MCF 10A (cell line): ENCODE measurements at regions of chr6 and their contacts with region 1.

Region 1: GRCh38 chr6:29696155-29697125 is 15.5 kb upstream of the ZFP57 start:
- DNase-seq: peak; percentile 57
- H3K4me3 Mint-ChIP-seq: no peak overlapping the region
- H3K27ac Mint-ChIP-seq: no peak overlapping the region
- H3K4me1 Mint-ChIP-seq: no peaks in the 10 kb centered on the region
- H3K27me3 Mint-ChIP-seq: no peaks in the 10 kb centered on the region
- CTCF ChIP-seq: peak; percentile 64

Region 2: GRCh38 chr6:29641430-29642148 is 54.9 kb before region 1 on chr6:
- CTCF ChIA-PET with region 1: interaction called, 369 read pairs
- POLR2A ChIA-PET with region 1: no interaction called
- intact Hi-C with region 1: no loop called
- DNase-seq: no peak
- H3K4me3 Mint-ChIP-seq: no peak overlapping the region
- H3K27ac Mint-ChIP-seq: no peak overlapping the region
- H3K4me1 Mint-ChIP-seq: peaks cover 10% of the 10 kb centered on the region
- H3K27me3 Mint-ChIP-seq: no peaks in the 10 kb centered on the region
- CTCF ChIP-seq: no peak

Region 3: DNA sequence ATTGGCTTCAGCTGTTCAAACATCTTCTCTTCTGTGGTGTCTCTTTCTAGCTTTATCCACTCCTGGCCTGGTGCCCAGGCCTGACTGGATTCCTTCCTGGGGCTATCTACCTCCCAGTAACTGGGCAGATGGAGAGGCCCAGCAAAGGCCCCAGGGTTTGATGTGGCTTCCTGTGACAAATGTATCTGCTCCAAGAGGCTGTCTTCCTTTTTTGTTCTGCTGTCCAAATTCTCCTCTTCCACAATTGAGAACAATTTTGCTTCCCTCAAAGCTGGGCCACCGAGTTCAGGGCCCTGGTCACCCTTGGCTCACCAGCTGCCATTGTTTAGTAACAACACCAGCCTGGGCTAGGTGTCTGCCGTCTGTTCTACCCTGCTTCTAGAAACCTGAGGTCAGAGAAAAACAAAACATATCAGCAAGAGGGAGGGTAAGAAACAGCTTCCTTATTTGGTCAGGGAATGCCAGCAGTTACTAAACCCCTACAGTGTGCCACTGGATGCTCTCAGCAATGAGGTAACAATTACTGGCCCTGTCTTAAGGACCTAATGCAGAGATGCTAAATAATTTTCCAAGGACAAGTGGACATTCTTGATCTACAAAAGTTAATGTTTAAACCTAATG is 19.3 kb before region 1 on chr6:
- CTCF ChIA-PET with region 1: interaction called, 30 read pairs
- POLR2A ChIA-PET with region 1: interaction called, 8 read pairs
- intact Hi-C with region 1: no loop called
- DNase-seq: peak; percentile 51
- H3K4me3 Mint-ChIP-seq: no peak overlapping the region
- H3K27ac Mint-ChIP-seq: peak overlapping the region; percentile 97
- H3K4me1 Mint-ChIP-seq: peaks cover 24% of the 10 kb centered on the region
- H3K27me3 Mint-ChIP-seq: no peaks in the 10 kb centered on the region
- CTCF ChIP-seq: no peak

Region 4: DNA sequence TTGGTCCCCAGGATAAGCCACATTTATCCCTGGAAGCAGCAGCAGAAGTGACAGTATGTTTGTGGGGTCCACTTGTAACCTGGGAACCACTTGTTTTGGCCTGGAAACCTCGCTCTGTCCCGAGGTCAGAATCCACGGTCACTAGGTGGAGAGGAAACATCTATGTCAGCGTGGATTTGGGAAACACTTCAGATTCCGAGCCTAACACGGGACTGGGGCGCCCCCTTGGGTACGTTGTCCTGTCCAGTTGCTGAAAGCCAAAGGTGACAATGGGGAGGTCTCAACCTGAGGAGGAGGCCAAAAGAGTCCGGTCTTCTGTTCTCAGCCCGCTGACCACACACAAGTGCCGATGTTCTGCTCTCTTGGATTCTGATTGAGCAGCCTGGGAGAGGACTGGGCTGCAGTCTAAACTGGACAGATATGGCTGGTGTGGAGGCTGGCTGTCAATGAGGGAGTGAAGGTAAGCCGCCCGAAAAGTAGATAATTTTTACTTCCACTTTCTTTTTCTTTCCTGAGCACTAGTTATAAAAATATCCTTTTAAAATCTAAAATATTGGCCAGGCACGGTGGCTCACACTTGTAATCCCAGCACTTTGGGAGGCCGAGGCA is 10.6 kb before region 1 on chr6:
- CTCF ChIA-PET with region 1: interaction called, 32 read pairs
- POLR2A ChIA-PET with region 1: no interaction called
- intact Hi-C with region 1: no loop called
- DNase-seq: peak; percentile 64
- H3K4me3 Mint-ChIP-seq: no peak overlapping the region
- H3K27ac Mint-ChIP-seq: no peak overlapping the region
- H3K4me1 Mint-ChIP-seq: no peaks in the 10 kb centered on the region
- H3K27me3 Mint-ChIP-seq: no peaks in the 10 kb centered on the region
- CTCF ChIP-seq: peak; percentile 53

Region 5: DNA sequence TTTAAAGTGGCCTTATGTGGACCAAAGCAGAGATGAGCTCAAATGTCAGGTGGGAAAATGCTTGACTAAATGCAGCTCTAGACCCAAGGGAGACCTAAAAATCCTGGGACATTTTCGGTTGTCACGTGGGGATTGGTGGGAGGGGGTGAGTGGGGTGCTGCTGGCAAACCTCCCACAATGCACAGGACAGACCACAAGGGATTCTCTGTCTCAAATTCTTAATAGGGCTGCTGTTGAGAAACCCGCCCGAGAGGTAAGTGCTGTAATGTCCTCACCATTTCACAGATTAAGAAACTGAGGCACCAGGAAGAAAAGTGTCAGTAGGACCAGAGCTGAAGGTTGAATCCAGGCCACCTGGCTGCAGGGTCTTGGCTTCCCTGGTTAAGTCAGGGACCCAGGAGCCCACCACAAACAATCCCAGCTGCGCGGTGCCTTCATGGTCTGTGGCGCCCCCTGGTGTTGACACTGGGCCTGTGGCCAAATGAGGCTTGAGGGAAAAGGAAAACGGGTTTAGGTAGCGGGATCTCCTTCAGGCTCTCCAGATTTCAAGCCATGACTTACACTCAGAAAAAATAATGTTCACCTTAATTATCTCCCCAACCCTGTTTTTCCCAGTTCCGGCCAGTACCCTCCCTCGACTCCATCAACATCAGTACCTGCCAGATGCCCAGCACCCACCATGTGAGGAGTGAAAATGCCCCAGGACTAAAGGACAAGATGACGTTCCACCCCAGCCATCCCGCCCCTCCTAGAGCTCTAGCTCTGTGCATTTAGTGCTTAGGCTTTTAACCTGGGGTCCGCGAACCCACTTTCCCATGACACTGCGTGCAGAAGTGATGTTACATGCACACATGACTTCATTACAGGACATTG is 138.4 kb after region 1 on chr6:
- CTCF ChIA-PET with region 1: interaction called, 12 read pairs
- POLR2A ChIA-PET with region 1: interaction called, 4 read pairs
- intact Hi-C with region 1: no loop called
- DNase-seq: peak; percentile 42
- H3K4me3 Mint-ChIP-seq: no peak overlapping the region
- H3K27ac Mint-ChIP-seq: no peak overlapping the region
- H3K4me1 Mint-ChIP-seq: peaks cover 6% of the 10 kb centered on the region
- H3K27me3 Mint-ChIP-seq: peaks cover 45% of the 10 kb centered on the region
- CTCF ChIP-seq: peak; percentile 91